SK-N-SH (cell line): ENCODE measurements at regions of chr11 and their contacts with region 1.

Region 1: GRCh38 chr11:43576803-43577521 is 103.6 kb upstream of the HSD17B12 start:
- DNase-seq: peak; percentile 71
- H3K4me3 ChIP-seq: peak overlapping the region; percentile 41 to 61; a peak in 3 of 4 replicates
- H3K27ac ChIP-seq: no peak overlapping the region
- H3K4me1 ChIP-seq: peaks cover 21 to 42% of the 10 kb centered on the region in 2 experiments; a peak in 3 of 4 replicates
- H3K27me3 ChIP-seq: peaks cover 81% of the 10 kb centered on the region
- CTCF ChIP-seq: peak; percentile 39
- EP300 ChIP-seq: no peak
- RAD21 ChIP-seq: no peak

Region 2: GRCh38 chr11:43267856-43268580 is 308.9 kb before region 1 on chr11:
- CTCF ChIA-PET with region 1: no interaction called
- POLR2A ChIA-PET with region 1: no interaction called
- DNase-seq: no peak
- H3K4me3 ChIP-seq: no peak overlapping the region
- H3K27ac ChIP-seq: peak overlapping the region in 1 of 2 experiments; percentile 9; a peak in 1 of 4 replicates
- H3K4me1 ChIP-seq: peaks cover 0 to 21% of the 10 kb centered on the region in 2 experiments; a peak in 2 of 4 replicates
- H3K27me3 ChIP-seq: no peaks in the 10 kb centered on the region
- CTCF ChIP-seq: no peak
- EP300 ChIP-seq: no peak
- RAD21 ChIP-seq: no peak

Region 3: GRCh38 chr11:43410394-43410793 is 166.6 kb before region 1 on chr11:
- CTCF ChIA-PET with region 1: no interaction called
- POLR2A ChIA-PET with region 1: no interaction called
- DNase-seq: no peak
- H3K4me3 ChIP-seq: no peak overlapping the region
- H3K27ac ChIP-seq: no peak overlapping the region
- H3K4me1 ChIP-seq: no peaks in the 10 kb centered on the region
- H3K27me3 ChIP-seq: no peaks in the 10 kb centered on the region
- CTCF ChIP-seq: no peak
- EP300 ChIP-seq: no peak
- RAD21 ChIP-seq: no peak

Region 4: GRCh38 chr11:43557553-43558110 is 19.3 kb before region 1 on chr11:
- CTCF ChIA-PET with region 1: interaction called, 28 read pairs
- POLR2A ChIA-PET with region 1: no interaction called
- DNase-seq: no peak
- H3K4me3 ChIP-seq: no peak overlapping the region
- H3K27ac ChIP-seq: no peak overlapping the region
- H3K4me1 ChIP-seq: peaks cover 0 to 2% of the 10 kb centered on the region in 2 experiments; a peak in 2 of 4 replicates
- H3K27me3 ChIP-seq: peaks cover 18% of the 10 kb centered on the region; the same call in 1 of the 2 replicates
- CTCF ChIP-seq: no peak
- EP300 ChIP-seq: no peak
- RAD21 ChIP-seq: peak; percentile 23; the same call in 1 of the 2 replicates

Region 5: DNA sequence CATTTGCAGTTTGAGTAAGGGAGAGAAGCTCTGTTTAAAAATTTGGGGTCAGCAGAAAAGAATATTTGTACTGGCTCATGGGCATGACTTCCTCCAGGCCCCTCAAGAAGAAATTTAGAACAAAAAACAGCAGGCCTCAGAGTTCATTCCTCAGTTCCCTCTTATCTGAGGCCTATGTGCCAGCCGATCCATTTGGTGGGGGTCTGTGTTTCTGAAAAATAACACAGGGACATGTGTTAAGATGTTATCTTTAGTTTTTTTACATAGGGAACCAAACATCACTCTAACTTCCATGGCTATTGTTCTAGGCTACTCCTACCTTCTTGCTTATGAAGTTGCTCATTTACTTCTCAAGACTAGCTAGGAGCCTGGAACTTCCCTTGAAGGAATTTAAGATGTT is 87.3 kb after region 1 on chr11:
- CTCF ChIA-PET with region 1: no interaction called
- POLR2A ChIA-PET with region 1: no interaction called
- DNase-seq: peak; percentile 47
- H3K4me3 ChIP-seq: no peak overlapping the region
- H3K27ac ChIP-seq: peak overlapping the region in 1 of 2 experiments; percentile 20; a peak in 1 of 4 replicates
- H3K4me1 ChIP-seq: no peaks in the 10 kb centered on the region; a peak in 1 of 4 replicates
- H3K27me3 ChIP-seq: no peaks in the 10 kb centered on the region
- CTCF ChIP-seq: no peak
- EP300 ChIP-seq: 0 out of 4 replicates have a peak, but pooled peaks of 1 of the 2 experiments have one; percentile 14
- RAD21 ChIP-seq: no peak

Region 6: GRCh38 chr11:43708776-43709175 is 131.8 kb after region 1 on chr11:
- CTCF ChIA-PET with region 1: interaction called, 24 read pairs
- POLR2A ChIA-PET with region 1: no interaction called
- DNase-seq: peak; percentile 30
- H3K4me3 ChIP-seq: no peak overlapping the region
- H3K27ac ChIP-seq: no peak overlapping the region
- H3K4me1 ChIP-seq: no peaks in the 10 kb centered on the region
- H3K27me3 ChIP-seq: no peaks in the 10 kb centered on the region
- CTCF ChIP-seq: peak; percentile 38
- EP300 ChIP-seq: no peak
- RAD21 ChIP-seq: peak; percentile 66

Region 7: DNA sequence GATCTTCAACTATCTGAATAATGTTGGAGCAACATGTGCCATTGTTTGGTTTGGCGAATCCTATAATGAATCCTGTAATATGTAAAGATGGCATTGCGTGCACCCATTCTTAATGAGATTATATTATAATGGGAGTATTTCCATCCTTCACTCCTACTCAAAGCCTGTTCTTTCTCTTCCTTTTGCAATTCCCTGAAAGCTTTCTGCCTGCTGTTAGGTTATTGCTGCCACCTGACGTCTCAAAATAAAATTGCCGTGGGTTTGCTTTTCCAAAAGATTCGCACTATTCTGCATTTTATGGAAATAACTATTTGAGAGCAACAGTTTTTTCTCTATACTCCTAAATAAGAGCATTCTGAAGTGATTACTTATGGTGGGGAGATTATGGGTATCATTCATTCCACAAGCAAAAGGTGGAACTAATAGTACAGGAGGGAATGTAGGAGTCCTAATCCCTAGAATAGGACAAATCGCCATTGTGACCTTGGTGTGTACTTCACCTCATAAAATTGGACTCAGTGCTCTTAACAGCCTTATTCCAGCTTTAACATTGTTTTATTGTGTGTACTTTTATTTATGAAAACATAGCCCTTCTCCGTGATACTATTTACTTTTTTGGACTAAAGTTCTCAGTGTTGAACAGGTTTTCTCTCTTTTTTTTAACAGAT is 234.1 kb after region 1 on chr11:
- CTCF ChIA-PET with region 1: interaction called, 15 read pairs
- POLR2A ChIA-PET with region 1: no interaction called
- DNase-seq: no peak
- H3K4me3 ChIP-seq: no peak overlapping the region
- H3K27ac ChIP-seq: no peak overlapping the region
- H3K4me1 ChIP-seq: peaks cover 3 to 8% of the 10 kb centered on the region in 2 experiments; a peak in 3 of 4 replicates
- H3K27me3 ChIP-seq: no peaks in the 10 kb centered on the region
- CTCF ChIP-seq: peak; percentile 65
- EP300 ChIP-seq: no peak
- RAD21 ChIP-seq: peak; percentile 80